Transverse colon (tissue), 4 donors: ENCODE measurements at regions of chr1 and their contacts with region 1.

Region 1: GRCh38 chr1:181406989-181407388 is 76.3 kb upstream of the CACNA1E start:
- DNase-seq: no peak
- H3K4me3 ChIP-seq: no peak overlapping the region
- H3K27ac ChIP-seq: no peak overlapping the region
- H3K4me1 ChIP-seq: no peaks in the 10 kb centered on the region
- H3K27me3 ChIP-seq: no peaks in the 10 kb centered on the region
- CTCF ChIP-seq: no peak
- EP300 ChIP-seq: no peak
- POLR2A ChIP-seq: no peak

Region 2: GRCh38 chr1:181206513-181206912 is 200.5 kb before region 1 on chr1:
- in situ Hi-C with region 1: loop called in 1 of 4 experiments (anchors 10 kb)
- intact Hi-C with region 1: no loop called
- DNase-seq: no peak
- H3K4me3 ChIP-seq: no peak overlapping the region
- H3K27ac ChIP-seq: no peak overlapping the region
- H3K4me1 ChIP-seq: no peaks in the 10 kb centered on the region
- H3K27me3 ChIP-seq: no peaks in the 10 kb centered on the region
- CTCF ChIP-seq: no peak
- EP300 ChIP-seq: no peak
- POLR2A ChIP-seq: no peak